Psoas muscle (tissue), 8 donors: ENCODE measurements at regions of chr3 and their contacts with region 1.

Region 1: DNA sequence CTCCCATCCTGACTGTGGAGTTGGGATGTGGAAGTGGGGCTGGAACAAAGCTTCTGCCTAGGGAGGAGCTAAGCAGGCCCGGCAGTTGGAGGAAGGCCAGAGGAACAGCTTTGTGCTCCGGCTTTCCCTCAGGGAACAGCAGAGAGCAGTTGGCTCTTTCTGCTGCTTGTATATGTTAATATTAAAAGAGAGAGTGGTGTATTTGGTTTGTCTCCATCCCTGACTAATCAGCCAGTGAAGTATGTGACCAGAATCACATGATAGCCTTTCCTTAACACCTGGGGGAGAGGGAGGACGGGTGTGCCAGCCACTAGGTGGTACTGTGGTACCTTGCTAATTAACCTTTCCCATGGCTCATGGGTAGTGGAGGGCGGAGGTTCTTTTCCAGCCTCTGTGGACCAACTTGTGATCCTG is 10.0 kb downstream of the EIF2B5 start:
- DNase-seq: peak in 1 of 2 donors; percentile 62
- ATAC-seq: peak; percentile 80 to 91 (median 88)
- H3K4me3 ChIP-seq: no peak overlapping the region
- H3K27ac ChIP-seq: peak overlapping the region; percentile 68
- H3K4me1 ChIP-seq: peaks cover 20% of the 10 kb centered on the region
- H3K27me3 ChIP-seq: no peaks in the 10 kb centered on the region
- CTCF ChIP-seq: peak; percentile 57

Region 2: DNA sequence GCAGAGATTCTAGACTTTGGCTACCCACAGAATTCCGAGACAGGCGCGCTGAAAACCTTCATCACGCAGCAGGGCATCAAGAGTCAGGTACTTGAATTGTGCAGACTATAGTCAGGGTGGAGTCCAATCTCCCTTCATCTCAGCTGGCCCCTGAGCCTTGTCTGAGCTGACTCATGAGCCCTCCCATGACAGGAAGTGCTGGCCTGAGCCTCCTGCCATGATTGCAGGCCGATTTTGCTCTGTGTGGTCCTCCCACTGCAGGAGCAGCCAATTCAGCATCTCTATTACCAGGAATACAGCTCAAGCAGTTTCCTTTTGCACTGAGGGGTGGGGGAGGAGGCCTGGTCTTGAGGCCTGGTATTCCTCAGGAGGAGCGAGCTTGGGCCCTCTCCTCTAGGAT is 35.0 kb after region 1 on chr3:
- intact Hi-C with region 1: loop called in 1 of 2 experiments (anchors 5 kb)
- DNase-seq: no peak
- ATAC-seq: no peak
- H3K4me3 ChIP-seq: no peak overlapping the region
- H3K27ac ChIP-seq: no peak overlapping the region
- H3K4me1 ChIP-seq: peaks cover 30% of the 10 kb centered on the region
- H3K27me3 ChIP-seq: no peaks in the 10 kb centered on the region
- CTCF ChIP-seq: no peak

Region 3: DNA sequence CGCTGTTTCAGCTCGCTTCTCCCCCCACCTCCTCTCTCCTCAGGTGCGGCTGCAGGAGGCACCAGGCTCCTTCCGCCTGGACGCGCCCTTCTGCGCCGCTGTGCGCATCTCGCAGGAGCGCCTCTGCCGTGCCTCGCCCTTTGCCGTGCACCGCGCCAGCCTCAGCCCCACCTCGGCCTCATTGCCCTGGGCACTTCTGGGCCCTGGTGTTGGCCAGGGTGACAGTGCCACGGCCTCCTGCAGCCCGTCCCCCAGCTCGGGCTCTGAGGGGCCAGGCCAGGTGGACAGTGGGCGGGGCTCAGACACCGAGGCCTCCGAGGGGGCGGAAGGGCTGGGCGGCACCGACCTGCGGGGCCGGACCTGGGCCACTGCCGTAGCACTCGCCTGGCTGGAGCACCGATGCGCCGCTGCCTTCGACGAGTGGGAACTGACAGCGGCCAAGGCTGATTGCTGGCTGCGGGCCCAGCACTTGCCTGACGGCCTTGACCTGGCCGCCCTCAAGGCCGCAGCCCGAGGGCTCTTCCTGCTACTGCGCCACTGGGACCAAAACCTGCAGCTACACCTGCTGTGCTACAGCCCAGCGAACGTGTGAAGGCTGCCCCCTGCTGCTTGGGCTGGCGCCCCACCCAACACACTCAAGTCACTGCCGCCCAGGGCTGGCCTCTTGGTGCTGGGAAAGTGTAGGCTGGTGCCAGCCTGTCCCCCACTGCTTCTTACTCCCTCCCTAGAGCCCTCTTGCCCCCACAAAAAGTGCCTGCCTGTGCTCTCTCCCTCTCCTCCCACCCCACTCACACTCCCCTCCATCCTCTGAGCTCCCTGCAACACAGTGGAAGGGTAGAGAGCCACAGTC is 96.6 kb after region 1 on chr3:
- intact Hi-C with region 1: loop called (anchors 5 to 10 kb)
- DNase-seq: peak in 1 of 2 donors; percentile 66
- ATAC-seq: peak; percentile 50 to 80 (median 76)
- H3K4me3 ChIP-seq: no peak overlapping the region
- H3K27ac ChIP-seq: no peak overlapping the region
- H3K4me1 ChIP-seq: no peaks in the 10 kb centered on the region
- H3K27me3 ChIP-seq: no peaks in the 10 kb centered on the region
- CTCF ChIP-seq: peak; percentile 47